ENCODE measurements at regions of chr7 and their contacts with region 1.

Region 1: DNA sequence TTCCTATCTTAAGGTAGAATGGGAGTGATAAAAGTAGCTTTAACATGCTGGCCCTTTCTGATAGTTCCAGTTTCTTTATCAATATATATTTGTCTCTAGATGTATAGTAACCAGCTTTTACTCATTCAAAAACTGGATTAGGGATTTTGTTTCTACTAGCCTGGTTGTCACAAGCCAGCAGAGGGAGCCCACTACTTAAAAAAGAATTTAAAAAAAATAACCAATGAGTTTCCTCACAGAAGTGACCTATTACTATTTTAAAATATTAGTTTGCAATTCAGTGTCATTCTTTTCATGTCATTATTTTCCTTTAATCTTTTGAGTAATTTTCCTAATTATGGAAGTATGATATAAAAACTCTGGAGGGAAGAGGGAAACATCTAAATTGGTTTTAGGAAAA is 142.1 kb downstream of the PHTF2 start:
- DNase-seq: peak; percentile 67
- H3K4me3 ChIP-seq: no peak overlapping the region; a peak in 1 of 4 replicates
- H3K27ac ChIP-seq: no peak overlapping the region
- H3K4me1 ChIP-seq: no peaks in the 10 kb centered on the region
- H3K27me3 ChIP-seq: no peaks in the 10 kb centered on the region
- CTCF ChIP-seq: peak; percentile 99
- EP300 ChIP-seq: no peak
- RAD21 ChIP-seq: peak; percentile 91

Region 2: GRCh38 chr7:77657427-77658224 is 283.0 kb before region 1 on chr7:
- CTCF ChIA-PET with region 1: interaction called, 42 read pairs
- POLR2A ChIA-PET with region 1: no interaction called
- DNase-seq: peak; percentile 64
- H3K4me3 ChIP-seq: no peak overlapping the region
- H3K27ac ChIP-seq: no peak overlapping the region
- H3K4me1 ChIP-seq: no peaks in the 10 kb centered on the region
- H3K27me3 ChIP-seq: no peaks in the 10 kb centered on the region
- CTCF ChIP-seq: peak; percentile 88
- EP300 ChIP-seq: no peak
- RAD21 ChIP-seq: peak; percentile 96

Region 3: DNA sequence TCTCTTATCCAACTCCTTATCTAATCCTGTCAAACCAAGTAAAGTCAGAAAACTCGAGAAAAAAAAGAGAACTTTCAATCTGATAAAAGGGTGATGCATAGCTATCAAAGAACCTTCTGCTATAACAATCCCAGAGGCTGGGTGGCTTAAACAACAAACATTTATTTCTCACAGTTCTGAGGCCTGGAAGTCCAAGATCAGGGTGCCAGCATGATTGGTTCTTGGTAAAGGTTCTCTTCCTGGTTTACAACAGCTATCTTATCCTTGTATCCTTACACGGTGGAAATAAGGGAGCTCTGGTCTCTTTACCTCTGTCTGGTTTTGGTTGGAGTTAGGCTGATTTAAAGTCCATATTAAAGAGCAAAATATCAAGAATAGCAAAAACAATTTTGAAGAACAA is 10.2 kb before region 1 on chr7:
- CTCF ChIA-PET with region 1: interaction called, 20 read pairs
- POLR2A ChIA-PET with region 1: no interaction called
- DNase-seq: no peak
- H3K4me3 ChIP-seq: no peak overlapping the region
- H3K27ac ChIP-seq: no peak overlapping the region
- H3K4me1 ChIP-seq: no peaks in the 10 kb centered on the region; a peak in 1 of 4 replicates
- H3K27me3 ChIP-seq: no peaks in the 10 kb centered on the region
- CTCF ChIP-seq: no peak
- EP300 ChIP-seq: no peak
- RAD21 ChIP-seq: no peak

Region 4: DNA sequence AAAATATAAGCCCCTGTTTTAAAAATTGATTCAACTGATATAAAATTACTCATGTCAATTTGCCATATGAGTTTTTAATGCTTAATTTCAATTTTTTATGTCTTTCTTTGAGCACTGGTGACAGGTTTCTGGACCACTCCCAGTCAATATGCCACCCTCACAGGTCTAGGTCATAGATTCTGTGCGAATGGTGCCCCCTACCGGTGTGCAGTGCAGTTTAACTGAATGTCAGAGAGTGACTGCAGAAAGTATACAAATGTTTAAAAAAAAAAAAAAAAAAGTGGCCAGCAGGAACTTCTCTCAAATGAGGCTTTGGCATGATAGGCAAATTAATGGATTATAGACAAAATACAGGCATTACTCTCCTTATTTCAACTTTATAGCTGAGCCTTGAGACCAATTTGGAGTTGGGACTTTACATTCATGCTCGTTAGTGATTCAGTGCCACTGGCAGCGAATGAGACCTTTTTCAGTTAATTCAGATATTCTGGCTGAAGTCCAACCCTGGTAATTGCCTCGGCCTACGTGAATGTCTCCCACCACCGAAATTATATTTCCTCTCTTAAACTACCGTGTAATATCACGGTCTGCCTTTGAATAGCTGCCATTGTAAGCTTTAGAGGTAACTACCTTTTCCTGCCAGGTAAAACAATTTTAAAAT is 285.5 kb after region 1 on chr7:
- CTCF ChIA-PET with region 1: interaction called, 13 read pairs
- POLR2A ChIA-PET with region 1: no interaction called
- DNase-seq: peak; percentile 66
- H3K4me3 ChIP-seq: no peak overlapping the region
- H3K27ac ChIP-seq: peak overlapping the region in 1 of 2 experiments; percentile 51; a peak in 1 of 4 replicates
- H3K4me1 ChIP-seq: peaks cover 6 to 7% of the 10 kb centered on the region in 2 experiments; a peak in 3 of 4 replicates
- H3K27me3 ChIP-seq: no peaks in the 10 kb centered on the region
- CTCF ChIP-seq: peak; percentile 87
- EP300 ChIP-seq: no peak
- RAD21 ChIP-seq: peak; percentile 90